Colonic mucosa (tissue), 4 donors: ENCODE measurements at regions of chr17 and their contacts with region 1.

Region 1: DNA sequence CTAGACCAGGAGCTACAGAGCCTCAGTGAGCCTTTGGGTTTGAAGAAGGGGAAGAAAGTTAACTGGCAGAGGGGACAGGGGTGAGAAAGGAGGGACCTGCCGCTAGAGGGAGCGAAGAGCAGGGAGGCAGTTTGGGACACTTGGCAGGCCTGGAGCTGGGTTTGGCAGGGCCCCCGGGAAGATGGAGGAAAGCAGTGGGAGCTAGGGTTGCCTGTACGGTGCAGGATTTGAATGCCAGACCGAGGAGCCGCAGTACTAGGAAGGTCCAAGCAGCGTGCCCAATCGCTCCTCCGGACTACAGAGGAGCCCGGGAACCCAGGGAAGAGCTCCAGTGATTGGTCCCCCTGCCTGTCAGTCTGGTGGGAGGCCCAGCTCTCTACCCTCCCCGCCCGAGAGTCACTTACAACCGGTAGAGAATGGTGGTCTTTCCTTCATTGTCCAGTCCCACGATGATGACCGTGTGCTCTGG is 1.3 kb downstream of the ARL5C start:
- DNase-seq: peak; percentile 84
- H3K4me3 ChIP-seq: peak overlapping the region; percentile 33
- H3K27ac ChIP-seq: no peak overlapping the region
- H3K4me1 ChIP-seq: peaks cover 4% of the 10 kb centered on the region
- H3K27me3 ChIP-seq: no peaks in the 10 kb centered on the region
- CTCF ChIP-seq: peak; percentile 67

Region 2: GRCh38 chr17:39110435-39111136 is 54.1 kb before region 1 on chr17:
- intact Hi-C with region 1: no loop called
- DNase-seq: no peak
- H3K4me3 ChIP-seq: no peak overlapping the region
- H3K27ac ChIP-seq: no peak overlapping the region
- H3K4me1 ChIP-seq: no peaks in the 10 kb centered on the region
- H3K27me3 ChIP-seq: no peaks in the 10 kb centered on the region
- CTCF ChIP-seq: no peak

Region 3: GRCh38 chr17:39235555-39236449 is 71.1 kb after region 1 on chr17:
- intact Hi-C with region 1: loop called (anchors 10 kb)
- DNase-seq: peak; percentile 45
- H3K4me3 ChIP-seq: no peak overlapping the region
- H3K27ac ChIP-seq: no peak overlapping the region
- H3K4me1 ChIP-seq: no peaks in the 10 kb centered on the region
- H3K27me3 ChIP-seq: peaks cover 3% of the 10 kb centered on the region
- CTCF ChIP-seq: peak; percentile 45